ENCODE measurements at regions of chr2 and their contacts with region 1.

Region 1: GRCh38 chr2:110677530-110678456 is at the start of gene BUB1:
- DNase-seq: peak; percentile 96 to 98
- H3K4me3 ChIP-seq: peak within 1 kb of the TSS; percentile 62 to 64
- H3K27ac ChIP-seq: peak within 1 kb of the TSS; percentile 82 to 91
- H3K4me1 ChIP-seq: peaks cover 0 to 15% (median 14%) of the 10 kb centered on the region in 4 donors
- H3K27me3 ChIP-seq: no peaks in the 10 kb centered on the region
- CTCF ChIP-seq: peak in 1 of 2 experiments; percentile 4

Region 2: GRCh38 chr2:110755491-110756078 is 77.8 kb after region 1 on chr2:
- intact Hi-C with region 1: loop called (anchors 5 kb)
- DNase-seq: no peak
- H3K4me3 ChIP-seq: no peak overlapping the region
- H3K27ac ChIP-seq: no peak overlapping the region
- H3K4me1 ChIP-seq: no peaks in the 10 kb centered on the region
- H3K27me3 ChIP-seq: no peaks in the 10 kb centered on the region
- CTCF ChIP-seq: peak; percentile 57 to 59